Colonic mucosa (tissue), 4 donors: ENCODE measurements at regions of chrX and their contacts with region 1.

Region 1: DNA sequence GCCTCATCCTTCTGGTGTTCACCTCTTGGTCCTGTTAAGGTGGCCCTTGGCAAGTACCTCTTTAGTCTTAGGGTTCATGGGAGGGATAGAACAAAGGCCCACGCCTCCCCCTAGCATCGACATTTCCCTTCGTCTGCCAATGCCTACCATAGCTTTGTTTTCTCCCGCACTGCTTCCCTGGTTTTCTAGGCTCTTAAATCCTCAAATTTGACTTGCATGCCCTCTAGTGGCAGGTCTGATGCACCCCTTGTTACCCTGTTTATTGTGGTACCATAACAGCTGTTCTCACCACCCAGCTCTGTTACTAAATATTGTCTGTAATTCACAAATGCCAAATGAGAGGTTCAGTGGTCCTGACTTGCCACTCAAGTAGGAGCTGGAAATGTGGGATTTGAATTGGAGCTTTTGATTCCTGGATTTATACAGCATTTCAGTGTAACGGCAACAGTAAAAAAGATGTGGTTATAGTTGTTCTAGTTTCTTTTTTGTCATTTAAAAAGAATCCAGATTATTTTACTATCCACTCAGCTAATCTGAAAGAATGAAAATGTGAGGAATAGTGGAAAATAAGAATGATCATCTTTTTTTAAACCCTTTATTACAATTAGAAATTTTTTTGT is 100.1 kb downstream of the REPS2 start:
- DNase-seq: peak; percentile 73
- H3K4me3 ChIP-seq: no peak overlapping the region
- H3K27ac ChIP-seq: no peak overlapping the region
- H3K4me1 ChIP-seq: no peaks in the 10 kb centered on the region
- H3K27me3 ChIP-seq: no peaks in the 10 kb centered on the region
- CTCF ChIP-seq: peak; percentile 67

Region 2: DNA sequence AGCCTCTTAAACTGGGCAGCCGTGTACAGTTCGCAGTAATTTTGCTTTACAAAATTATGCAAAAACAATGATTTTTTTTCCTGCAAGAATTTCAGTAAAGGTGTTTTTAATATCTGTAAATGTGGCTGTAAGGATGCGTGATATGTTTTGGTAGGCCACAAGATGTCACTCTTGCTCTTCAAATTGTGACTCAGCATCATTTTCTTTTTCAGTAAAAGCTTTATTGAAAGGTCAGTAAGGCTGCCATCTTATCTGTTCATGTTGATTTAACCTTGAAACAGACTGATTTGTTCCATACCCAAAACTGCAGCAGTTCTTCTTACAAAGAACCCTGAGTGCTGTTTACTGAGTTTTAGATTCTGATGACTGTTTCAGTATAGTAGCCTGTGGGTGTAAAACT is 220.4 kb before region 1 on chrX:
- intact Hi-C with region 1: loop called (anchors 5 kb)
- DNase-seq: no peak
- H3K4me3 ChIP-seq: no peak overlapping the region
- H3K27ac ChIP-seq: no peak overlapping the region
- H3K4me1 ChIP-seq: no peaks in the 10 kb centered on the region
- H3K27me3 ChIP-seq: no peaks in the 10 kb centered on the region
- CTCF ChIP-seq: peak; percentile 58

Region 3: GRCh38 chrX:16882702-16883486 is 163.7 kb before region 1 on chrX:
- intact Hi-C with region 1: loop called (anchors 5 kb)
- DNase-seq: peak; percentile 82
- H3K4me3 ChIP-seq: peak overlapping the region; percentile 40
- H3K27ac ChIP-seq: peak overlapping the region; percentile 57
- H3K4me1 ChIP-seq: no peaks in the 10 kb centered on the region
- H3K27me3 ChIP-seq: peaks cover 4% of the 10 kb centered on the region
- CTCF ChIP-seq: peak; percentile 55